Activated CD4-positive, alpha-beta memory T cell treated with anti-CD3 and anti-CD28 coated beads, Interleukin-2, amount 10 ng/mL, durations not matched to agents 7 days and 5 days (primary cell): ENCODE measurements at regions of chr10 and their contacts with region 1.

Region 1: GRCh38 chr10:116809483-116810119 is 39.7 kb upstream of the ENO4 start:
- DNase-seq: no peak
- H3K4me3 Mint-ChIP-seq: no peak overlapping the region
- H3K27ac Mint-ChIP-seq: no peak overlapping the region
- H3K4me1 Mint-ChIP-seq: no peaks in the 10 kb centered on the region
- H3K27me3 Mint-ChIP-seq: peaks cover 3% of the 10 kb centered on the region

Region 2: GRCh38 chr10:116780691-116781205 is 28.9 kb before region 1 on chr10:
- CTCF ChIA-PET with region 1: no interaction called
- POLR2A ChIA-PET with region 1: no interaction called
- DNase-seq: no peak
- H3K4me3 Mint-ChIP-seq: no peak overlapping the region
- H3K27ac Mint-ChIP-seq: no peak overlapping the region
- H3K4me1 Mint-ChIP-seq: no peaks in the 10 kb centered on the region
- H3K27me3 Mint-ChIP-seq: no peaks in the 10 kb centered on the region

Region 3: DNA sequence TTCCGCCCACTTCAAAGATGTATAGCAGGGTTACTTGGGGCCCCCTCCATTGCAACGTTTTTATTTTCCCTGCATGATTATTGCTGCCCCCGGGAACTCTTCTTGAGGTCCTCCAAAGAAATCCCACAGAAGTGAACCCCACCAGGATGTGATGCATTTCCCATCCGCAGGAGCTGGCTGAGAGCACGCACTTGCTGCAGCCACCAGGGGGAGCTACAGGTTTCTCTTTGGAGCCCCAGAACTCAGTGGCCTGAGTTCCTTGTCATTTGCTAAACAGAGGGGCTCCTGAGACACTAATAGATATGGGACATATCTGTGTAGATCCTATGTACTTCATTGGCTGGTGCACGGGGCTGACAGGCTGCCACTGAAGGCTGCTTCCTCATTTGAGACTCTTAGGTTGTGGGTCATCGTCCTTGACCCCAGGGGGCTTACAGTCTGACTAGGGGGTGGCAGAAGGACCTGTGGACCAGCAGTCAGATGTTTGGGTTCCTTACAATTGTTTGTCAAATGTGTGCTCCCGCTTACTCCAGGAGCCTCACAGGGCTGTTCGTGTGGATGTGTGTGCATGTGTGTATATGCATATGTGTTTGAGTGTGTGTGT is 12.6 kb before region 1 on chr10:
- CTCF ChIA-PET with region 1: interaction called, 10 read pairs
- POLR2A ChIA-PET with region 1: no interaction called
- DNase-seq: peak; percentile 69
- H3K4me3 Mint-ChIP-seq: no peak overlapping the region
- H3K27ac Mint-ChIP-seq: no peak overlapping the region
- H3K4me1 Mint-ChIP-seq: peaks cover 3% of the 10 kb centered on the region
- H3K27me3 Mint-ChIP-seq: peaks cover 13% of the 10 kb centered on the region

Region 4: DNA sequence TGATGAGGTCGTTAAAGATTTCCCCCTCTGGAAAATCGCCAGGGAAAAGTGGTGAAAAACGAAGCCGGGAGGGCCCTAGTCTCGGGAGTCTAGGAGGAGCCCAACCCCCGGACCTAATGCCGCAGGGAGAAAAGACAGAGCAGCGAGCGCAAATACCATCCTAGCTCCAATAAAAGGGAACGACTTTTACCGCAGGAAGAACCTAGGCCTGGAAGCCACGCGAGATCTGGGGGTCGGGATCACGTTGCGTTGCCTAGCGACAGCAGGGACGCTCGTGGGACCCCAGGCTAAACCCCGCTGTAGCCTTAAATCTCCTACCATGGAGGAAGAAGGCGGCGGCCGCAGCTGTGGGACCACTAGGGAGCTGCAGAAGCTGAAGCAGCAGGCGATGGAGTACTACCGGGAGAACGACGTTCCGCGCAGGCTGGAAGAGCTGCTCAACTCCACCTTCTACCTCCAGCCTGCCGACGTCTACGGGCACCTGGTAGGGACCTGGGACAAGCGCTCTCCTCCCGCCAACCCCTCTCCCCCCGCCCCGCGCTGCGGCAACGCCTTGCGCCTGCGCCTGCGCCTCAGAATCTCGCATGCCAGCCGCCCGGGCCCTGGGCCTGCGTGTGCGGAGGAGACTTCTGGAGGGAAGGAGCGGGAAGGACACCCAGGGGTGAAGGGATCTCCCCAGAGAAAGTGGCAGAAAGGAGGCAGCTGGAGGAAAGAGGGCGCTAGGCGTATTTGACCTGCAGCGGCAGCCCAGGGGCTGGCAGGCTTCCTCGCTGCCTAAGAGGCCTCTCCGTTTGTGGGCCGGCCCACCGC is 39.9 kb after region 1 on chr10 and contains the start of gene ENO4:
- CTCF ChIA-PET with region 1: no interaction called
- POLR2A ChIA-PET with region 1: no interaction called
- DNase-seq: no peak
- H3K4me3 Mint-ChIP-seq: peak within 1 kb of the TSS; percentile 19
- H3K27ac Mint-ChIP-seq: no peak within 1 kb of the TSS
- H3K4me1 Mint-ChIP-seq: peaks cover 7% of the 10 kb centered on the region
- H3K27me3 Mint-ChIP-seq: peaks cover 50% of the 10 kb centered on the region
- total RNA-seq, gene ENO4: not detected